Calu3 (cell line): ENCODE measurements at regions of chr7 and their contacts with region 1.

Region 1: DNA sequence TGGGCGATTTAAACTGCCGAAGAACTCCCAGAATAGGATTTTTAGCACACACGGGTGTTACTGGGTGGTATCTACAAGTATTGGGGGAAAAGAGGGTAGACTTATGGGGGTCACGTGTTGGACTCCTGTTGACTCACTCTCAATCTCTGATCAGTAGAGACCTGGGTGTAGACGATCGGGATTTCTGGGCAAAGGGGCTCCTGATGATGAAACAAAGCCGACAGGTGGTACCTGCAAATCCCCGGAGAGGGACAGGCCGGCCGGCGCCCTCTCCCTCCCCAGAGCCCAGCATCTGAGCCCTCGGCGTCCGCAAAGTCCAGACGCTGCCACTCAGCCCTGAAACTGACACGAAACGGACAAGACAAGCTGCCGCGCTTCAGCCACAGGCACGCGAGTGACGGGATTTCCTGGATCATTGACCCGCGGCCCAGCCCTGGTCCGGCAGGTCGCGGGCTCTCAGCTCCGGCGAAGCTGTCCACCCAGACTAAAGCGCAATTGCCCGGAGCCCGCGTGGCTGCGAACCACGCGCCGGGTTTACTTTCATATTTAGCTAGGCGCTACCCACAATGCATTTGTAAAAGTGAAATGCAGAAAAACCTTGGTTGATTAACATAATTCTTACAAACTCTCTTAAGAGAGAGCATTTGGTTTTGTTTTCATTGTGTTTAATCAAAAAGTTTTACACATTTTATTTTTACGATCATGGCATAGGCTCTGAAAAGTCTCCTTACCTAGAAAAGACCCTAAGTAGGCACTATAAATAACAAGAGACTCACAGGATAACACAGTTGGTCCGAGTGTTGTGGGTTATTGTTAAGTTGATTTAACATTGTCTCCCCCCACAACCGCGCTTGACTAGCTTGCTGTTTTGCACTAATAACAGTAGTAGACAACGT is 56.9 kb upstream of the EZH2 start:
- DNase-seq: peak; percentile 63
- H3K4me3 Mint-ChIP-seq: peak overlapping the region; percentile 83
- H3K27ac Mint-ChIP-seq: peak overlapping the region; percentile 91
- H3K4me1 Mint-ChIP-seq: no peaks in the 10 kb centered on the region
- H3K27me3 Mint-ChIP-seq: no peaks in the 10 kb centered on the region
- CTCF ChIP-seq: no peak

Region 2: DNA sequence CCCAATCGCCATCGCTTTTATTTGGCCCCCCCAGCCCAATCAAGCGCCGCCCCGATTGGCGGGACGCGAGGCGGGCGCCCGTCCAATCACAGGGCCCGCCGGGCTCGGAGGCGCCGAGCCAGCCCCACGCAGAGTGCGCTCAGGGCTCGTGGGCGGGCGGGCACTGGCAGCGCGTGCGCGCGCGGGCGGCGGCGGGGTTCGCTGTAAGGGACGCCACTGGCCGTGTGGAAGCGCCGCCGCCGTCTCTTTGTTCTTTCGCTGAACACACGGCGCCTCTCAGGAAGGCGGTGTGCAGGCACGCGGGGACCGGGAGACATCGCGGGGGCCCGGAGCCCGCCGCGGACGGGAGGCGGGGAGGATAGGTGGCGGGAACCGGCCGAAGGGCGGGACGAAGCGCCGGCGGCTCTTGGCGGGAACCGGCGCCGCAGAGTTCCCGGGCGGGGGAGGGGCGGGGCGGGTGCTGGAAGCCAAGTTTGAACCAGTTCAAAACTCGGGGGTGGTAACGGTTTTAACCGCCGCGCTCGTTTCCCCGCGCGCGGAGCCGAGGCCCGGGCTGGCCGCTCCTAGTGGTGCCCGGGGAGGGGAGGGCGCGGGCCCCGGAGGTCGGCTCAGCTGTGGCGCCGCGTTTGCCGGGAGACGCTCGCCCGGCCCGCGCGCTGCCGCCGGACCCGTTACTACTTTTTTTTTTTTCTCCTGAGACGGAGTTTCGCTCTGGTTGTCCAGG is 56.5 kb before region 1 on chr7:
- CTCF ChIA-PET with region 1: no interaction called
- intact Hi-C with region 1: loop called (anchors 2 kb)
- DNase-seq: peak; percentile 94
- H3K4me3 Mint-ChIP-seq: peak overlapping the region; percentile 88
- H3K27ac Mint-ChIP-seq: peak overlapping the region; percentile 76
- H3K4me1 Mint-ChIP-seq: no peaks in the 10 kb centered on the region
- H3K27me3 Mint-ChIP-seq: no peaks in the 10 kb centered on the region
- CTCF ChIP-seq: no peak

Region 3: GRCh38 chr7:148914208-148914777 is 26.7 kb before region 1 on chr7:
- CTCF ChIA-PET with region 1: interaction called, 12 read pairs
- intact Hi-C with region 1: no loop called
- DNase-seq: peak; percentile 45
- H3K4me3 Mint-ChIP-seq: peak overlapping the region; percentile 55
- H3K27ac Mint-ChIP-seq: peak overlapping the region; percentile 70
- H3K4me1 Mint-ChIP-seq: peaks cover 11% of the 10 kb centered on the region
- H3K27me3 Mint-ChIP-seq: peaks cover 7% of the 10 kb centered on the region
- CTCF ChIP-seq: no peak

Region 4: DNA sequence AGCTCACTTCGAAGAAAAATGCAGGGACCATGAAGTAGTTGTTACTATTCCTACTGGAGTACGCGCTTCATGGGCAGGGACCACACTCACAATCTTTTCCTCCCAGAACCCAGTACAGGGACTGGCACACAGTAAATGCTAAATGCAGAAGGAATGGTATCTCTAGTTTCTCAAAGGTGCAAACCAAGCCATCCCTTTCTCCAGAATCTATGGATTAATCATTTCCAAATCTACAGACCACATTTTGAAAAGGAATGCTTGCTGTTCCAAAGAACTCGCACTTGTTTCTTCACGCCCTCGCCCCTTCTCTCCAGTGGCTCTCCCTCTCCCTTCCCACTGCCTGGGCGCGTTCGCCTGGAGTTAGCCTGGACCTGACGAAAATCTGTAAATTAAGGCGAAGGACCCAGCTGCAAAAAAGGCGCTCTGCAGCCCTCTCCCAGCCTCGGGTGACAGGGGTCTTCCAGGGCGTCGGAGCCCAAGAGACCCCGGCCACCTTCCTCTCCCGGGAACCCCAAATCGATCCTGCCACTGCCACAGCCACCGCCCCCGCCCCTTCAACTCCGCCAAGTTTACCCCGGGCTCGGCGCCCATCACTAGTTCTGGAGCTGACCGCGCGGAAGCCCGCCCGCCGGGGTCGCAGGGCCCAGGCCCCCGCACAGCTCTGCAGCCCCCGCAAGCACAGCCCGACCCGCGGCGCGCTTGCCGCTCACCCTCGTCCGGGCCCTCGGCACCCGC is 86.8 kb after region 1 on chr7:
- CTCF ChIA-PET with region 1: no interaction called
- intact Hi-C with region 1: no loop called
- DNase-seq: no peak
- H3K4me3 Mint-ChIP-seq: peak overlapping the region; percentile 94
- H3K27ac Mint-ChIP-seq: peak overlapping the region; percentile 98
- H3K4me1 Mint-ChIP-seq: peaks cover 25% of the 10 kb centered on the region
- H3K27me3 Mint-ChIP-seq: no peaks in the 10 kb centered on the region
- CTCF ChIP-seq: no peak